PC-3 (cell line): ENCODE measurements at regions of chr10 and their contacts with region 1.

Region 1: GRCh38 chr10:11515596-11516430 is 95.6 kb downstream of the USP6NL start:
- DNase-seq: peak; percentile 53
- ATAC-seq: peak; percentile 79
- H3K4me3 ChIP-seq: no peak overlapping the region
- H3K27ac ChIP-seq: no peak overlapping the region
- H3K4me1 ChIP-seq: no peaks in the 10 kb centered on the region
- H3K27me3 ChIP-seq: no peaks in the 10 kb centered on the region
- CTCF ChIP-seq: peak; percentile 70

Region 2: DNA sequence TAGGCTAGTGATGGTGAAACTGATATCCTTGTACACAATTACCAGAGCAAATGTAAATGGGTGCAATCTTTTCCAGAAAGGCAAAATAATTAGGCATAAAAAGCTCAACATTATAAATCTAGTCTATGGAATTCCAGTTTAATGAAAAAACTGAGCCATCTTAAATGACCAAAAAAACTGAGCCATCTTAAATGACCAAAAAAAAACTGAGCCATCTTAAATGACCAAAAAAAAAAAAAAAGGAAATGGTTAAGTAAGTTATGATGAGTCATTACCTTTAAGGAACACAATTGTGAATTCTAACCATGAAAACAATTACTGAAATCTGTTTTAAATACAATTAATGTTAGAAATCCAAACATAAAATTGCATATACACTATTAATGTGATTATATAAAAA is 70.4 kb after region 1 on chr10:
- CTCF ChIA-PET with region 1: no interaction called
- POLR2A ChIA-PET with region 1: no interaction called
- intact Hi-C with region 1: loop called (anchors 5 kb)
- DNase-seq: no peak
- ATAC-seq: no peak
- H3K4me3 ChIP-seq: no peak overlapping the region
- H3K27ac ChIP-seq: no peak overlapping the region
- H3K4me1 ChIP-seq: no peaks in the 10 kb centered on the region; the same call in 1 of the 2 replicates
- H3K27me3 ChIP-seq: no peaks in the 10 kb centered on the region
- CTCF ChIP-seq: no peak

Region 3: GRCh38 chr10:11602919-11603523 is 87.2 kb after region 1 on chr10:
- CTCF ChIA-PET with region 1: no interaction called
- POLR2A ChIA-PET with region 1: no interaction called
- intact Hi-C with region 1: loop called (anchors 5 kb)
- DNase-seq: peak; percentile 51
- ATAC-seq: peak; percentile 79
- H3K4me3 ChIP-seq: no peak overlapping the region; the same call in 1 of the 2 replicates
- H3K27ac ChIP-seq: peak overlapping the region; percentile 18; the same call in 1 of the 2 replicates
- H3K4me1 ChIP-seq: peaks cover 14% of the 10 kb centered on the region
- H3K27me3 ChIP-seq: no peaks in the 10 kb centered on the region
- CTCF ChIP-seq: no peak

Region 4: DNA sequence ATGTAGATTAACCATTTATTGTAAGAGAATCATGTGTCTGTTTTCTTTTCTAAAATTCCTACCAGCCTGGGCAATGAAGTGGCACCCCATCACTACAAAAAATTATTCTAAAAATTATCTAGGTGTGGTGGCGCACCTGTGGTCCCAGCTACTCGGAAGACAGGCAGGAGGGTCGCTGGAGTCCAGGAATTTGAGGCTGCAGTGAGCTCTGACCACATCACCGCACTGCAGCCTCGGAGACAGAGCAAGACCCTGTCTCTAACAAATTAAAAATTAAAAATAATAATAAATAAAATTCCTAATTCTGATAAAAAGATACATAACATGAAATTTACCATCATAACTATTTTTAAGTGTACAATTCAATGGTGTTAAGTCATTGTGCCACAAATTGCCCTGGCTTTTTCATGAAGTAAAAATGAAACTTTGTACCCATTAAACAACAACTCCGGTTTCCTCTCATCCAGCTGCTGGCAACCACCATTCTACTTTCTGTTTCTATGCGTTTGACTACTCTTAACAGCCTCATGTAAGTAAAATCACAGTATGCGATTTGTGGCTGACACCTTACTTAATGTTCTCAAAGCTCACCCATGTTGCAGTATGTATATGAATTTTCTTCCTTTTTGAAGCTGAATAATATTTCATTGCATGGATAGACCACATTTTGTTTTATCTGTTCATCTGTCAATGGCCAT is 116.2 kb after region 1 on chr10:
- CTCF ChIA-PET with region 1: no interaction called
- POLR2A ChIA-PET with region 1: no interaction called
- intact Hi-C with region 1: no loop called
- DNase-seq: no peak
- ATAC-seq: no peak
- H3K4me3 ChIP-seq: no peak overlapping the region
- H3K27ac ChIP-seq: no peak overlapping the region
- H3K4me1 ChIP-seq: no peaks in the 10 kb centered on the region
- H3K27me3 ChIP-seq: no peaks in the 10 kb centered on the region
- CTCF ChIP-seq: no peak

Region 5: GRCh38 chr10:11713186-11713743 is 197.5 kb after region 1 on chr10:
- CTCF ChIA-PET with region 1: no interaction called
- POLR2A ChIA-PET with region 1: no interaction called
- intact Hi-C with region 1: no loop called
- DNase-seq: no peak
- ATAC-seq: no peak
- H3K4me3 ChIP-seq: no peak overlapping the region
- H3K27ac ChIP-seq: no peak overlapping the region
- H3K4me1 ChIP-seq: peaks cover 18% of the 10 kb centered on the region
- H3K27me3 ChIP-seq: no peaks in the 10 kb centered on the region
- CTCF ChIP-seq: no peak

Region 6: GRCh38 chr10:11724938-11725776 is 209.3 kb after region 1 on chr10:
- CTCF ChIA-PET with region 1: no interaction called
- POLR2A ChIA-PET with region 1: no interaction called
- intact Hi-C with region 1: loop called (anchors 1 kb)
- DNase-seq: peak; percentile 63
- ATAC-seq: peak; percentile 93
- H3K4me3 ChIP-seq: no peak overlapping the region
- H3K27ac ChIP-seq: no peak overlapping the region
- H3K4me1 ChIP-seq: peaks cover 2% of the 10 kb centered on the region
- H3K27me3 ChIP-seq: no peaks in the 10 kb centered on the region
- CTCF ChIP-seq: peak; percentile 72

Region 7: GRCh38 chr10:11757821-11758463 is 242.1 kb after region 1 on chr10:
- CTCF ChIA-PET with region 1: no interaction called
- POLR2A ChIA-PET with region 1: no interaction called
- intact Hi-C with region 1: loop called (anchors 1 kb)
- DNase-seq: peak; percentile 72
- ATAC-seq: peak; percentile 99
- H3K4me3 ChIP-seq: no peak overlapping the region
- H3K27ac ChIP-seq: no peak overlapping the region
- H3K4me1 ChIP-seq: no peaks in the 10 kb centered on the region
- H3K27me3 ChIP-seq: no peaks in the 10 kb centered on the region
- CTCF ChIP-seq: peak; percentile 77